ENCODE measurements at regions of chr22 and their contacts with region 1.

Region 1: GRCh38 chr22:17368554-17369438 is 464 bp upstream of the CECR2 start:
- DNase-seq: peak; percentile 8
- H3K4me3 Mint-ChIP-seq: peak overlapping the region; percentile 66
- H3K27ac Mint-ChIP-seq: no peak overlapping the region
- H3K4me1 Mint-ChIP-seq: peaks cover 22% of the 10 kb centered on the region
- H3K27me3 Mint-ChIP-seq: peaks cover 44% of the 10 kb centered on the region

Region 2: GRCh38 chr22:17077255-17077654 is 291.5 kb before region 1 on chr22:
- CTCF ChIA-PET with region 1: no interaction called
- intact Hi-C with region 1: loop called (anchors 1 kb)
- DNase-seq: no peak
- H3K4me3 Mint-ChIP-seq: no peak overlapping the region
- H3K27ac Mint-ChIP-seq: no peak overlapping the region
- H3K4me1 Mint-ChIP-seq: peaks cover 20% of the 10 kb centered on the region
- H3K27me3 Mint-ChIP-seq: no peaks in the 10 kb centered on the region

Region 3: DNA sequence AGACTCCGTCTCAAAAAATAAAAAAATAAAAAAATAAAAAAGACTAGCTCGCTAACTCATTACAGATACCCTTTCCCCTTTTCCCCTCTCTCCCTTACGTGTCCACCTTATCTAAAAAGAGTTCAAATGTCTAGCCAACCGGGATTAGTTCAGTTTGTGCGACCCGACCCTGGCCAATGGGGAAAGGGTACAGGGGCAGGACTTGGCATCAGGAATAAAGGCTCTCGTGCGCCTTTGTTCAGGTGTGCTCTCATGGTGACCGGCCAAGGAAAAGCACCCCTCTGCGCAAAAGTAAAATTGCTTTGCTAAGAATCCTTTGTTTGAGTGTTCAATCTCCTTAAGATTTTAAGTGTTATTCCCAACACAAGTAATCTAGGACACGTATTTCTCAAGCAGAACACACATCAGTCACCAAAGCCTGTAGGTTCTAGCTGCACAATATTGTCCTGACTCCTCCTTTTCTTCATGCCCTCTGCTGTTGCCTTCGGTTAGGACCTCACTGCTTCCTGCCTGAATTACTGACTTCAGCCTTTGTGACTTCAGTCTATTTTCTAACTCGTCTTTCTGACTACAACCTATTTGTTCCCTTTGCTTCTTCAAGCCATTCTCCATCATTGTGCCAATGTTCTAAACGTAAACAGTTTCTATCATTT is 20.2 kb before region 1 on chr22:
- CTCF ChIA-PET with region 1: interaction called, 4 read pairs
- intact Hi-C with region 1: loop called (anchors 2 kb)
- DNase-seq: no peak
- H3K4me3 Mint-ChIP-seq: no peak overlapping the region
- H3K27ac Mint-ChIP-seq: no peak overlapping the region
- H3K4me1 Mint-ChIP-seq: no peaks in the 10 kb centered on the region
- H3K27me3 Mint-ChIP-seq: peaks cover 3% of the 10 kb centered on the region

Region 4: DNA sequence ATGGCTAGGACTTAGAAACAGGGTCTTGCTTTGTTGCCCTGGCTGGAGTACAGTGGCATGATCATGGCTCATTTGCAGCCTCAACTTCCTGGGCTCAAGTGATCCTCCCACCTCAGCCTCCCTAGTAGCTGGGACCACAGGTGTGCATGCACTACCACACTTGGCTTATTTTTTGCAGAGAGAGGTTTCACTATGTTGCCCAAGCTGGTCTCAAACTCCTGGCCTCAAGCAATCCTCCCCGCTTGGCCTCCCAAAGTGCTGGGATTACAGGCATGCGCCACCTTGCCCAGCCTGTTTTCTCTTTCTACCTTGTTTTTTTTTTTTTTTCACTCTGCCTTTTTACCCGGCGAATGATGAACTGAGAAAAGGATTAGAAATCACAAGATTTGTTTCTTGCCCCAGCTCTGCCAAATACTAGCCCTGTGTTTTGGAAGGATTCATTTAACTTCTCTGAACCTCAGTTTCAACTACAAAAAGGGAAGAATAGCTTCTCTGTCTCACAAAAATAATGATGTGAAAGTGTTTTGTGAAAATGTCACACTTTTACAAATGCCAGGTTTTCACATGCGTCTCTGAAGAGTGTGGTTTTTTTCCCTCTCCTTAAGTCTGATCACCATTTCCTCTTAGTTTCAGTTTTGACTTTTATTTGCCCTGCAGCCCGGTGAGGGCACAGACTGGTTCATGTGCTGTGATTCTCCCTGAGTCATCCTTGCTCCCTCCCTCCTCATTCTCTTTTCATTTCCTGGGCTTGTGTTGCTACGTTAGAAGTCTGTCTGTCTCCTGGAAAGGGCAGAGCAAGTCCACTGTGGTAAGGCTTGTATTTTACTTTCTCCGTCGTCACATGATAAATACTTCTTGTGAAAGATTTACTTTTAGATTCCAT is 337.5 kb after region 1 on chr22:
- CTCF ChIA-PET with region 1: no interaction called
- intact Hi-C with region 1: no loop called
- DNase-seq: peak; percentile 67
- H3K4me3 Mint-ChIP-seq: peak overlapping the region; percentile 49
- H3K27ac Mint-ChIP-seq: peak overlapping the region; percentile 89
- H3K4me1 Mint-ChIP-seq: peaks cover 20% of the 10 kb centered on the region
- H3K27me3 Mint-ChIP-seq: no peaks in the 10 kb centered on the region

Measured in activated naive CD4-positive, alpha-beta T cell treated with anti-CD3 and anti-CD28 coated beads for 36 hours (primary cell).